Mucosa of descending colon (tissue), 3 donors: ENCODE measurements at regions of chr2 and their contacts with region 1.

Region 1: DNA sequence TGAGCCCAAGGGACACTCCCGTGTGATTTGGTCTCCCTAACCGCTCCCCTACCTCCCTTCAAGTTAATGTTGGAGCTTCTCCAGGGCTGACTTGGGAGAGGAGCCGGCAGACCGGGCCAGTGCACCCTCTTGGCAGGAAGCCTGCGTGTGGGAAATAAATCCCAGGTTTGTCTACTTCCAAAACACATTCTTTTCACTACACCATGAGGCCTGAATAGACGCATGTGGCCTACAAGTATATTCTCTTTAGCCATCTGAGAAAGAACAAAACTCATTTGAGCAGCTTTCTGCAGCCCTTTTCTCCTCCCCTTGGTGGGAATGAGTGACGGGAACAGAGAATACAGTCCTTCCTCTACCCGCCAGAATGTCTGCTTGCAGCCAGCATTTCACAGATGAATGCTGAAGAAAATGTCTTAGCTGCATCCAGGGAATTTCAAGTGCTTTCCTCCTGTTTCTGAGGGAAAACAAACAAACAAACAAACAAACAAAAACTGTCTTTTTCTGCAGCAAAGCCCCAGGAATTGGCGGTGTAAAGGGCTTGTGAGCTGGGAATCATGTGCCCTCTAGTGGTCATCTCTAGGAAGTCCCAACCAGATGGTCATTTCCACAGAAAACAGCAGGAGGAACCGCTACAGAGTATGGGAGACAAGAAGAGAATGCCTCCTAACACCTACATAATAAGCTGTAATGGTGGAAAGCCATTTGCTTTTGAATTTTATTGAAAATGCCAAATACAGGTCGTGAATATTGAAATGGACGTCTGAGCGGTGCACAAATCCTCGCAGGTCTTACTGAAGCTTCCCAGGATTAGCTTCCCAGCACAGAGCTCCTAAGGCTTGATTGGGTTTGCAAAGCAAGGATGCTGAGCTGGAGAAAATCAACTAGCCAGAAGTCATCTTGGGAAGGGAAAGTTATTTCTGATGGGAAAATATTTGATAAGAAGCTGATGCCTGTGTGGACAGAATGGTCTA is 41.2 kb upstream of the DAPL1 start:
- DNase-seq: peak in 1 of 3 donors; percentile 46
- ATAC-seq: peak; percentile 85
- H3K4me3 ChIP-seq: no peak overlapping the region
- H3K4me1 ChIP-seq: peaks cover 4% of the 10 kb centered on the region
- CTCF ChIP-seq: peak; percentile 71

Region 2: DNA sequence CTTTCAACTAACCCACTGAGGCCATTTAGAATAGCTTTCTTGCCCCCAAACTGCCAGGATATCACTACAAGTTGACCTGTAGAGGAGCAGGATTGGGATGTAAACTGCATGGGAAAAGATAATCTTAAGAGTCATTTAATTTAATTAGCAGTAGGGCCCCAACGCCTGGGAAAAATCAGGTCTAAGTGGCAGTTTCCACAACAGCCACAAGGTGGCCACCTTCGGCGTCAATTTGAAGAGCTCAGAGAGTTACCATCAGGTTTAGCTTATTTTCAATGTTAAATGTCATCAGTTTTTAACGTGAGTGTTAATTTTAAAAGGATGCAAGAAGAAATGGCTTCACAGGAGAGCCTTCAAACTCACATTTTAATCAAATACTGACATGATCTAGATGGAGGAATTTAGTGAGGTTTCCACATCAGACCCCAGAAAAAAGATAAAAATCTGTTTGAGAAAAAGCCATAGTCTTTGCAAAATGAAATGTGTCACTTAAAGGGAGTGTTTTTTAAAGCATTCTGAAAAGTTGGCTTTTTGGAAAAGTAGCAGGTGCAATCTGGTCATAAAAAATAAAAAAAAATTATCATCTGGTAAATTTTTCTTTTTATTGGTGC is 729.5 kb before region 1 on chr2:
- intact Hi-C with region 1: loop called in 1 of 2 experiments (anchors 10 kb)
- DNase-seq: peak in 2 of 3 donors; percentile 59 to 73
- ATAC-seq: peak; percentile 61
- H3K4me3 ChIP-seq: no peak overlapping the region
- H3K4me1 ChIP-seq: no peaks in the 10 kb centered on the region
- CTCF ChIP-seq: peak; percentile 69

Region 3: DNA sequence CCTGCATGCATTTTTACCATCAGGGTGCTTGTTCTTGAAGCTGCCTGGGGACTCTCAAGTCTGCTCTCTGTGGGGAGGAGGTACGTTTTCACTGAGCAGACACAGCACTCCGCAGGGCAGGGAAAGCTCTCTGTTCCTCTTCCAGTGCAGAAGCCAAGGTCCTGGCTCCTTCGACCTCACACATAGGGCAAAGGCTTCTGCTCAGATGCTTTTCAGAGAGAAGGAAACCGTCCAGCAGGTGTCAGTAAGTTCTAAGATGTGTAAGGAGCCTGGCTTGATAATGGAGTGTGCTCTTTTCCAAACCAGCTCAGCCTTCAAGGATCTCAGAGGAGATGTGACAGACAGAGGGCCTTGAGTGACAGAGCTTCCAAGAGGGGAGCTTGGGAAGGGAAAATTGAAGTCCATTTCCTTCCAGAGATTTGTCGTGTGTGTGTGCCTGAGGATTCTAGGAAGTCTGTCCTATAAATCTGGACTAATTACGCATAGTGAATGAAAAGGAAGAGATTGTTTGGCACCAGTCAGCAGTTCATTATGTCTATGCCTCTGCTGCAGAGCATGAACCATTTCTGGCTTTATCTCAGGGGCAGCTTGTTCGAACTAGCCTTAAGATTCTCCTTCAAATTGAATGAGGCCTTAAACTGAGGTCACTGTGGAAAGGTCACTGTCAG is 719.6 kb before region 1 on chr2:
- intact Hi-C with region 1: loop called (anchors 5 to 10 kb)
- DNase-seq: peak in 2 of 3 donors; percentile 28 to 89
- ATAC-seq: peak; percentile 94
- H3K4me3 ChIP-seq: no peak overlapping the region
- H3K4me1 ChIP-seq: no peaks in the 10 kb centered on the region
- CTCF ChIP-seq: no peak

Region 4: DNA sequence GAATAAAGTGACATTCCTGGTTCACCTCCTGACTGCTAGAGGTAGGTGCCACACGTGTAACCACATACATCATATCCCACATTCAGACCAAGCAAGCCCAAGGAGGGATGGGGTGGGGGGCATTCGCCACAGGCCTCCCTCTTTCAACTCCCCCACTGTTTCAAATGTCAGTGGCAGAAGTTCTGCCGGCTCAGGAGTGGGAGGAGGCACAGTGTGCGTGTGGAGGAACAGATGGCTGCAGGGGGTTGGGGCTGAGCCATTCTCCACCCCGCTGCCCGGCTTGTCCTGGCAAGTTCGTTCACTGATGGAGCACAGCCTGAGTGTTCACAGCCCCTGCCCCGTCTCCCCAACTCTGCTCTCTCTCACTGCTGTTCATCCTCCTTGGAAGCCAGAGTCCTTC is 139.1 kb after region 1 on chr2:
- intact Hi-C with region 1: no loop called
- DNase-seq: no peak
- ATAC-seq: no peak
- H3K4me3 ChIP-seq: no peak overlapping the region
- H3K4me1 ChIP-seq: no peaks in the 10 kb centered on the region
- CTCF ChIP-seq: no peak